Activated naive CD4-positive, alpha-beta T cell treated with anti-CD3 and anti-CD28 coated beads for 36 hours (primary cell): ENCODE measurements at regions of chr13 and their contacts with region 1.

Region 1: DNA sequence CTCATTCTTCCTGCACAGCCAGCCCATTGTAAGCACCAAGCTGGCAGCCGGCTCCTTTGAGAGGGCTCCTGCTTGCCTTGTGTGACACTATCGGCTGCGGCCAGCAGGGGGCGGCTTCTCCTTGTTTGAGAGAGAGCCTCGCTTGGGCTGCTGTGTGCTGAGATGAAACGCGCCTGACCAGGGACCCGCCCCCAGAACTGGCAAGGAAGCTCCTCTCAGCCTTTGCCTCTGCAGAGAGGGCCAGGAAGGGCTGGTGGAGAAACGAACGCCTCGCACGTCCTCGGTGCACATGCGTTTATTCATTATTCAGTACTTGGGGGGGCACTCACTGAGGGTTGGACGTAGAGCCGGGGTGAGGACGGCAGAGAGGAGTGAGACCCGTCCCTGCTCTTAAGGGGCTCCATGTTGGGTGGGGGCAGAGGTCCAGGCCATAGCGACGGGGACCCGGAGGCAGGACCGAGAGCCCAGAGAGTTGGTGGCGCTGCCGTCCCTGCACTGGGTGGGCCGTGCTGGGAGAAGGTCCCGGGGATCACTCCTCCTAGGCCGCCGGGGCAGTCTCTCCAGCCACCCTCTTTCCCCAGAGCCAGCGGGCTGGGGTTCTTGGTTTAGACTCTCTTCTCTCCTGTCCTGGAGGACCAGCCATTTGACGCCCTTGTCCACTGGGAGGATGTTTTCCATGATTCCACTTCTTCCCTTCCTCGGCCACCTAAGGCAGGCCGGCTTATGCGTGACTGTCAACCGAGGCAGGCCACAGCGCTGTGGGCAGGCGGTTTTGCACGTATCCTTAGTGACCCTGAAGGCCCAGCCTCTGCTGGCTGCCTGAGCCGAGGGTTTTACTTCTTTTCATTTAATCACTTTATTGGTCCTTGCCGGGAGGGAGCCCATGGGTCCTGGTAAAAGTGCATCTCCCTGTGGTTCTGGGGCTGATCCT is 174.5 kb downstream of the KATNAL1 start:
- DNase-seq: peak; percentile 99
- H3K4me3 Mint-ChIP-seq: no peak overlapping the region
- H3K27ac Mint-ChIP-seq: no peak overlapping the region
- H3K4me1 Mint-ChIP-seq: peaks cover 7% of the 10 kb centered on the region
- H3K27me3 Mint-ChIP-seq: no peaks in the 10 kb centered on the region

Region 2: DNA sequence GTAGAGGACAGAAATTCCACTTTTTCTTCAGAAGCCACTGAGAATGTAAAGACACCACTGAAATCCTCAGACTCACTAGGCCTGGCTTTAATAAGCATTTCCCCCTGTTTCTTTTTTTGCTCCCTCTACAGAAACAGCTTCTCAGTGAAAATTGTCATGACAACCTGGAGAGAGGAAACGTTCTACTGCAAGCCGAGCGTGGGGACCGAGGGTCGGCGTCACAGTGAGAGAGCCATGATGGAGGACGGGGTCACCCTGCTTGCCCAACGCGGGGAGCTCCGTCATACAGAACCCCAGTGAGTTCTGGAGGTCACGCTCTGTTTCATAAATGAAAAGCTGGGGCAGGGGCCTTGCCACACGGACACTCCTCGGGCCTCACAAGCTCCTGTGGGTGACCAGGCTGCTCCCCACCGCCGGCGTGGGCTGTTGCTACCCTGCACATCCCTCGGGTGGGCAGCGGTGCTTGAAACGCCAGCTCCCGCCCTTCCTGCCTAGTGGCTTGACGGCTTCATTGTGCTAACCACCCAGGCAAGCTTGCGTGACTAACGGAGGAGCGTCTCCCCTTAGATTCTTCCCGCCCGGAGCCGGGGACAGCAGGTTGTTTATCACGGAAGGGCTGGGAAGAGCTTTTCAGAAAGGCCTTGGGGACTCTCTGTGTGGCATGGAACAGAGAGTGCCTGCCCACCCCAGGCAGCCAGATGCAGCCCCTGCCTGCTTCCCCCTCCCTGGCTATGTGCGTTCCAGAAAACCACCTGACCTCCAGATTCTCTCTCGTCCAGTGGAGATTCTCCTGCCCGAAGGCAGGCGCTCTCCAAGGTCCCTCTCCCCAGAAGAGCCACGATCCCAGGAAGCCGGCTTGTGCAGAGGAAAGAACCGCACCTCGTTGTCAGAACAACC is 20.9 kb after region 1 on chr13:
- CTCF ChIA-PET with region 1: interaction called, 96 read pairs
- intact Hi-C with region 1: loop called (anchors 1 kb)
- DNase-seq: no peak
- H3K4me3 Mint-ChIP-seq: no peak overlapping the region
- H3K27ac Mint-ChIP-seq: no peak overlapping the region
- H3K4me1 Mint-ChIP-seq: peaks cover 40% of the 10 kb centered on the region
- H3K27me3 Mint-ChIP-seq: no peaks in the 10 kb centered on the region

Region 3: DNA sequence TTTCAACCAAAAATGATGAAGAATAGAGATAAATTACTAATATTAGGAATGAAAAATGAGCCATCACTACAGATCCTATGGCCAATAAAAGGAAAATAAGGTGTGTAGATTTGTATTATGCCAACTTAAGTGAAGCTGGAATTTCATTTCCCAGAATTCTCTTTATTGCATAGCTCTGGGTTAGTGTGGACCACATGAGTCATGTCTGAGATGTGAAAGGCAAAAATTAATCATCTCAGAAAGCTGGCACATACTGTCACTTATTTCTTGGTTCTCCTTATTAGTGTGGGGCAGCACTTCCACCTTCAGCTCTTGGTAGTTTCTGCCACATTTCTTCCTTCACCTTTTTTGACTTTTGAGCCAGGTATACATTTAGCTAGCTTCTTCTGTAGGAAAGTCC is 91.8 kb after region 1 on chr13:
- CTCF ChIA-PET with region 1: interaction called, 6 read pairs
- intact Hi-C with region 1: loop called (anchors 1 kb)
- DNase-seq: peak; percentile 14
- H3K4me3 Mint-ChIP-seq: no peak overlapping the region
- H3K27ac Mint-ChIP-seq: no peak overlapping the region
- H3K4me1 Mint-ChIP-seq: peaks cover 16% of the 10 kb centered on the region
- H3K27me3 Mint-ChIP-seq: no peaks in the 10 kb centered on the region

Region 4: GRCh38 chr13:30334663-30335386 is 201.9 kb after region 1 on chr13:
- CTCF ChIA-PET with region 1: interaction called, 31 read pairs
- intact Hi-C with region 1: loop called (anchors 1 kb)
- DNase-seq: peak; percentile 21
- H3K4me3 Mint-ChIP-seq: no peak overlapping the region
- H3K27ac Mint-ChIP-seq: no peak overlapping the region
- H3K4me1 Mint-ChIP-seq: peaks cover 4% of the 10 kb centered on the region
- H3K27me3 Mint-ChIP-seq: no peaks in the 10 kb centered on the region

Region 5: GRCh38 chr13:30572859-30573275 is 440.0 kb after region 1 on chr13:
- CTCF ChIA-PET with region 1: interaction called, 4 read pairs
- intact Hi-C with region 1: loop called (anchors 2 kb)
- DNase-seq: peak; percentile 29
- H3K4me3 Mint-ChIP-seq: peak overlapping the region; percentile 41
- H3K27ac Mint-ChIP-seq: peak overlapping the region; percentile 12
- H3K4me1 Mint-ChIP-seq: peaks cover 33% of the 10 kb centered on the region
- H3K27me3 Mint-ChIP-seq: no peaks in the 10 kb centered on the region

Region 6: GRCh38 chr13:30865123-30866049 is 732.5 kb after region 1 on chr13:
- CTCF ChIA-PET with region 1: no interaction called
- intact Hi-C with region 1: loop called (anchors 1 kb)
- DNase-seq: peak; percentile 64
- H3K4me3 Mint-ChIP-seq: no peak overlapping the region
- H3K27ac Mint-ChIP-seq: no peak overlapping the region
- H3K4me1 Mint-ChIP-seq: peaks cover 3% of the 10 kb centered on the region
- H3K27me3 Mint-ChIP-seq: peaks cover 8% of the 10 kb centered on the region